ENCODE measurements at regions of chrX and their contacts with region 1.

Region 1: GRCh38 chrX:10119399-10119990 is 37.3 kb upstream of the CLCN4 start:
- DNase-seq: peak; percentile 65
- H3K4me3 Mint-ChIP-seq: no peak overlapping the region
- H3K27ac Mint-ChIP-seq: peak overlapping the region; percentile 48
- H3K4me1 Mint-ChIP-seq: peaks cover 15% of the 10 kb centered on the region
- H3K27me3 Mint-ChIP-seq: no peaks in the 10 kb centered on the region

Region 2: DNA sequence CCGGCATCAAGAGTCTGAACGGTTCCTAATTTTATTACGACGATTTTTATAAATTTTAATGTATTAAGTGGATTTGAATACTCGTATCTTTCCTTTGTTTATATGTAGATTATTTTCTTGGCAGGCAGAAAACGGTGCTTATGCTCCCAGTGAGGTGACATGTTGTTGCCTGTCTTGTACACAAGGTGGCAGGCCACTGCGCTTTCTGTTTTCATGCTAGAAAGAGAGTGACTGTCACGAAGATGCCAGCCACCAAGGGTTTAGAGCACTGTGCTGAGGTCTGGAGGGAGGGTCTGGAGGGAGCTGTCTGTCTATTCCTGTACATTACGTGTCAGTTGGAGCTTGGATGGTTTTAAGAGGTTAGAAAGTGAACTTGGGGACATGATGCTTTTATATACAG is 245.5 kb before region 1 on chrX:
- intact Hi-C with region 1: loop called (anchors 1 kb)
- DNase-seq: peak; percentile 1
- H3K4me3 Mint-ChIP-seq: no peak overlapping the region
- H3K27ac Mint-ChIP-seq: no peak overlapping the region
- H3K4me1 Mint-ChIP-seq: no peaks in the 10 kb centered on the region
- H3K27me3 Mint-ChIP-seq: peaks cover 12% of the 10 kb centered on the region

Region 3: DNA sequence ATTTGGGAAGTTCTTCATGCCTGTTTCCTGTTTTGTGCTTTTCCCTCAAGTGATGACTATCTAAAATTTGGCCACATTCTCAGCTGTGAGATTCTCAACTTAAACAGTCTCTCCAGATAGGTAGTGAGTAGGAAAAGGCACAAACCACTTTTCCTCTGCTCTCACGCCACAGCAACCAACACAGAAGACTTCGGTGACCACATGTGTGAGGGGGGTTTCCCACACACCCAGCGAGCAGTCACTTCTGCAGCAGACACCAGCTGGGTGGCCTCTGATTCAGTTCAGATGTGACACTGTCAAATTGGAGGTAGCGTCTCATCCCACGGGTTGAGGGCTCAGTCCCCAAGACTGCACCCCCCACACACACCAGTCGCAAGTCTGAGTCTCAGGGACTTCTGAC is 177.4 kb before region 1 on chrX:
- intact Hi-C with region 1: loop called (anchors 5 kb)
- DNase-seq: peak; percentile 56
- H3K4me3 Mint-ChIP-seq: peak overlapping the region; percentile 35
- H3K27ac Mint-ChIP-seq: peak overlapping the region; percentile 89
- H3K4me1 Mint-ChIP-seq: peaks cover 19% of the 10 kb centered on the region
- H3K27me3 Mint-ChIP-seq: peaks cover 26% of the 10 kb centered on the region

Region 4: DNA sequence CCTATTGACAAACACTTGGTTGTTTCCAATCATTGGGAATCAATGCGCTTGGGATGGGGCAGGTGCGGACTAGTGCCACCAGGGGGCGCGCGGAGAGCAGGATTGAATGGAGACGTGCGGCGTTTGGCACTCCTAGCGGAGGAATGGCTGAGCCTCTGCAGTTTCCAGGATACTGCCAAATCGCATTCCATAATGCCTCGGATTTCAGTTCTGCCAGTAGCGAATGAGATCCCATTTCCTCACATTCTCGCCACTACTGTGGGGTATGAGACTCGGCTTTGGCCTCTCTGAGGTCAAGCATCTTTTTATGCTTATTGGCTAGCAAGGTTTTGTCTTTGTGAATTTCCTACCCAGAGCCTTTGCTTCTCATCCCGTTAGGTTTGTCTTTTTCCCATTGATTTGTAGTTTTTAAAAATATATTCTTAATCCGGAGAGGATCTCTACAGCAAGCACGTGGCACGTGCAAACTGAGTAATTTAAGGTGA is 123.6 kb before region 1 on chrX:
- intact Hi-C with region 1: loop called (anchors 1 kb)
- DNase-seq: peak; percentile 64
- H3K4me3 Mint-ChIP-seq: peak overlapping the region; percentile 73
- H3K27ac Mint-ChIP-seq: peak overlapping the region; percentile 40
- H3K4me1 Mint-ChIP-seq: peaks cover 21% of the 10 kb centered on the region
- H3K27me3 Mint-ChIP-seq: peaks cover 2% of the 10 kb centered on the region

Region 5: GRCh38 chrX:10098270-10098713 is 21.2 kb before region 1 on chrX:
- intact Hi-C with region 1: loop called (anchors 1 kb)
- DNase-seq: peak; percentile 53
- H3K4me3 Mint-ChIP-seq: peak overlapping the region; percentile 79
- H3K27ac Mint-ChIP-seq: peak overlapping the region; percentile 87
- H3K4me1 Mint-ChIP-seq: peaks cover 34% of the 10 kb centered on the region
- H3K27me3 Mint-ChIP-seq: no peaks in the 10 kb centered on the region

Region 6: DNA sequence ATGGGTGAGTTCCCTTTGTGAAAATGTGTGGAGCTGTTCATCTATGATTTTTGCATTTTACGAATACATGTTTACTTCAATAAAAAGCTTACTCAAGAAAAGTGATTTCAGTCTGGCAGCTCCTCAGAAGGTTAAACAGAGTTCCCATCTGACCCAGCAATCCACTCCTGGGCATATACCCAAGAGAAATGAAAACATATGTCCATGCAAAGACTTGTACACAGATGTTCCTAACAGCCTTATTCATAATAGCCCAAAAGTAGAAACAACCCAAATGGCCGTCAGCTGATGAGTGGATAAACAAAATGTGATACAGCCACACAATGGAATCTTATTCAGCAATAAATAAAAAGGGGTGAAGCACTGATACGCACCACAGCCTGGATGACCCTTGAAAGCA is 58.1 kb after region 1 on chrX:
- intact Hi-C with region 1: no loop called
- DNase-seq: no peak
- H3K4me3 Mint-ChIP-seq: no peak overlapping the region
- H3K27ac Mint-ChIP-seq: no peak overlapping the region
- H3K4me1 Mint-ChIP-seq: no peaks in the 10 kb centered on the region
- H3K27me3 Mint-ChIP-seq: peaks cover 8% of the 10 kb centered on the region

Region 7: GRCh38 chrX:10415306-10416001 is 296.0 kb after region 1 on chrX:
- intact Hi-C with region 1: no loop called
- DNase-seq: no peak
- H3K4me3 Mint-ChIP-seq: no peak overlapping the region
- H3K27ac Mint-ChIP-seq: no peak overlapping the region
- H3K4me1 Mint-ChIP-seq: no peaks in the 10 kb centered on the region
- H3K27me3 Mint-ChIP-seq: no peaks in the 10 kb centered on the region

Region 8: GRCh38 chrX:10939384-10939897 is 819.9 kb after region 1 on chrX:
- intact Hi-C with region 1: no loop called
- DNase-seq: no peak
- H3K4me3 Mint-ChIP-seq: no peak overlapping the region
- H3K27ac Mint-ChIP-seq: no peak overlapping the region
- H3K4me1 Mint-ChIP-seq: no peaks in the 10 kb centered on the region
- H3K27me3 Mint-ChIP-seq: no peaks in the 10 kb centered on the region

Measured in activated T-helper 1 cell treated with anti-CD3 and anti-CD28 coated beads, Interleukin-12 subunit alpha, Interleukin-12 subunit beta, Interleukin-2, Interleukin-4 antibody, amounts not matched to agents 30 ng/mL and 10 ng/mL and 1 ng/mL, durations not matched to agents 14 hours and 24 hours and 36 hours (primary cell).